ENCODE measurements at regions of chr9 and their contacts with region 1.

Region 1: DNA sequence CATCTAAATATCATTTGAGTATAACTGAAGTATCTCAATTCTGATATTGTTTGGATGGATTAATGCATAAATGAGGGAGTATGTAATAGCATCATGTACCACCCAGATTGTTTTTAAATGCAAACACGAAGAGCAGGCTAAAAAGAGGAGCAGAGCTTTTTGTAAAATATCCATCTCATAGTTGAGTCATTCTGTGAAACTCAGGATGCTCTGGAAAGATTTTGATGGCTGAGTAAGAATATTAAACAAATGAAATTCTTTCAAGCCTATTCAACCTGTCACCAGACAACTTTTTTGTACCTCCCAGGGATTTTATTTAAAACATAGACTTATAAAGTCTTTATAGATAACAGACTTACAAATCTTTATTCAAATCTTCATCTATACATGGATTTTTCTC is 625.9 kb downstream of the TLE4 start:
- DNase-seq: no peak
- ATAC-seq: no peak
- H3K4me3 ChIP-seq: no peak overlapping the region
- H3K27ac ChIP-seq: no peak overlapping the region
- H3K4me1 ChIP-seq: no peaks in the 10 kb centered on the region
- H3K27me3 ChIP-seq: no peaks in the 10 kb centered on the region
- CTCF ChIP-seq: no peak

Region 2: DNA sequence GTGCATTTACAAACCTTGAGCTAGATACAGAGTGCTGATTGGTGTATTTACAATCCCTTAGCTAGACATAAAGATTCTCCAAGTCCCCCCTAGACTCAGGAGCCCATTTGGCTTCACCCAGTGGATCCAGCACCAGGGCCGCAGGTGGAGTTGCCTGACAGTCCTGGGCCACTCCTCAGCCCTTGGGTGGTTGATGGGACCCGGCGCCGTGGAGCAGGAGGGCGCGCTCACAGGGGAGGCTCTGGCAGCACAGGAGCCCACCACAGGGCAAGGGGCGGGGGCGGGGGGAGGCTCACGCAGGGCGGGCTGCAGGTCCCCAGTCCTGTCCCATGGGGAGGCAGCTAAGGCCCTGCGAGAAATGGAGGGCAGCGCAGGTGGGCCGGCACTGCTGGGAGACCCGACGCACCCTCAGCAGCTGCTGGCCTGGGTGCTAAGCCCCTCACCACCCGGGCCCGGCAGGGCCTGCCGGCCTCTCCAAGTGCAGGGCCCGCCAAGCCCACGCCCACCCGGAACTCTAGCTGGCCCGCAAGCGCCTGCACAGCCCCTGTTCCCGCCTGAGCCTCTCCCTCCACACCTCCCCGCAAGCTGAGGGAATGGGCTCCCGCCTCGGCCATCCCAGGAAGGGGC is 12.4 kb before region 1 on chr9:
- CTCF ChIA-PET with region 1: no interaction called
- POLR2A ChIA-PET with region 1: interaction called, 11 read pairs
- in situ Hi-C with region 1: no loop called
- intact Hi-C with region 1: no loop called
- DNase-seq: no peak
- ATAC-seq: no peak
- H3K4me3 ChIP-seq: no peak overlapping the region
- H3K27ac ChIP-seq: no peak overlapping the region
- H3K4me1 ChIP-seq: no peaks in the 10 kb centered on the region
- H3K27me3 ChIP-seq: no peaks in the 10 kb centered on the region
- CTCF ChIP-seq: no peak

Measured in Panc1 (cell line).